Sigmoid colon (tissue), 7 donors: ENCODE measurements at regions of chr5 and their contacts with region 1.

Region 1: DNA sequence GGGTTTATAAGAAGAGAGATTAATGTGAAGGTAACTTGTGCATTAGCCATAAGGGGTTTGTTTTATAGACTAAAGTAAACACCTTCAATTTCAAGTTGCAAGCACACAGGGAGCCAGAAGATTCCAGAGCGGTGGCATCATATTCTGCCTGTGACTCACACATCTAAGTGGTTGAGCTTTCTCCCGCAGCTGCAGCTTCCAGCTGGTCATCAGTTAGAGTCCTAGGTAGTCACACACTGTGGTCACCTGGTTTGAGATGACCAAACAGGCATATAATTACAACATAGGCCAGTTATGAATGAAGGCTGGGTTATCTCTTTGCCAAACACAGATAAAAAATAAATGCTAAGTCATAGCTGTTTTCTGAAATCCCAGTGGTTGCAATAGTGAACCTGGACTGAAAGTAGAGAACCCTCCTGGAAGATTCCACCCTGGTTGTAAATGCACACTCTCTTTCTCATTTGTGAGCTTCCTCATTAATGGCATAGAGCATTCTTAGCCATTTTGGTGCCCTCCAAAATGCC is 171.3 kb downstream of the GDNF start:
- DNase-seq: peak; percentile 89
- H3K4me3 ChIP-seq: no peak overlapping the region
- H3K27ac ChIP-seq: peak overlapping the region; percentile 34 to 85 (median 78)
- H3K4me1 ChIP-seq: peaks cover 0 to 72% (median 50%) of the 10 kb centered on the region in 4 donors
- H3K27me3 ChIP-seq: no peaks in the 10 kb centered on the region
- CTCF ChIP-seq: no peak
- EP300 ChIP-seq: peak in 2 of 4 donors; percentile 54 to 85
- POLR2A ChIP-seq: no peak

Region 2: GRCh38 chr5:37495210-37495609 is 173.4 kb before region 1 on chr5:
- intact Hi-C with region 1: loop called (anchors 5 kb)
- DNase-seq: no peak
- H3K4me3 ChIP-seq: no peak overlapping the region
- H3K27ac ChIP-seq: peak overlapping the region; percentile 54 to 83 (median 72)
- H3K4me1 ChIP-seq: peaks cover 0 to 29% (median 28%) of the 10 kb centered on the region in 4 donors
- H3K27me3 ChIP-seq: no peaks in the 10 kb centered on the region
- CTCF ChIP-seq: peak in 1 of 4 experiments; percentile 6
- EP300 ChIP-seq: no peak
- POLR2A ChIP-seq: no peak

Region 3: DNA sequence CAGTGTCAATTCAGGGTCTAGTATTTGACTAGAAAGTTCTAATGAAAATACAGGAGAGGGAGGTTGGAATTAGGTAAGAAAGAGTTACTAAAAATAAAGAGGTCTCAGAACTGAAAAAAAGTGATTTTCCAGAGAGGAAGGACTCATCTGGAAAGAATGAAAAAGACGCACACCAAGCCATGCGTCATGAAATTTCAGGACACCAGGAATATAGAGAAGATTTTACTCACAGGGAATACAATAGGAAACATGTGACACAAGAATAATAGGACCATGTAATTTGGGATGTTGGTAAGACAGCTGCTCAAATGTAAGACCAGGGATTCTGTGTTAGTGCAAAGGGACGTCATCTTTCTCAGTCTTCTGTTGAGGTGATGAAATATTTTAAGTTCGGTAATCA is 53.4 kb before region 1 on chr5:
- intact Hi-C with region 1: loop called (anchors 5 kb)
- DNase-seq: no peak
- H3K4me3 ChIP-seq: no peak overlapping the region
- H3K27ac ChIP-seq: peak overlapping the region; percentile 53 to 83 (median 73)
- H3K4me1 ChIP-seq: peaks cover 0 to 28% (median 17%) of the 10 kb centered on the region in 4 donors
- H3K27me3 ChIP-seq: no peaks in the 10 kb centered on the region
- CTCF ChIP-seq: no peak
- EP300 ChIP-seq: peak; percentile 36 to 90 (median 66)
- POLR2A ChIP-seq: no peak